PC-9 (cell line): ENCODE measurements at regions of chr4 and their contacts with region 1.

Region 1: DNA sequence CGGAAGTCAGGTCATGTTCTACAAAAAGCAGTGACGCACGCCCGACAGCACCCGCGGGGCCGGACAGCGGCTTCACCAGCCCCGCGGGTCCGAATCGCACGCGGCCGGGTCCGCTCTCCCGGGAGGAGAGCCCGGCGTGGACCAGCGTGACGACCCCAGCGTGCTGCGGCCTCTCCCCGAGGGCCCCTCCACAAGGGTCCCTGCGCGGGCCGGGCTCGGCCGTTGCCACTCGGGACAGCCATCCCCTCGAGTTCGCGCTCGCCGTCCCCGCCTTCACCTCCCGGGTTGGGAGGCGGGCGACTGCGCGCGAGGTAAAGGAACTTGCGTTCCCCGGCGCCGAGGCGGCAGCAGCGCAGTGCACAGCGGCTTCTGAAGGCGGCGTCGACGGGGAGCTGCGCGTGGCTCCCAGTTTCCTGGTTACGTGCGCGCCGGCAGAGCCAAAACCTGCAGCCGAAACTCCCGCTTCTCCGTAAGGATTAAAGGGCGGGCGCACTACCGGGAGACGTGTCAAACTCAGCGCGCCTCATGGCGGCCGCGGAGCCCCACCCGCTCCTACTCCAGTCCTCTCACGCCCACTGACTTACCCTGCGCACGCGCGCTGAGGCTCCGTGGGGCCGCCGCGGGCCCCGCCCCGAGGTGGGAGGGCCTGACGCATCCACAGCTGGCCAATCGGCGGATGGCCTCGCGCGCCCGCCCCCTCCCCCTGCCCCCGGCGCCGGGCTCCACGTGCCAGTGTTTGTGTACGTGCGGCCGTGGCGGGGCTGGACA is 416 bp upstream of the LRP2BP start:
- DNase-seq: peak; percentile 88 to 99
- H3K4me3 ChIP-seq: peak overlapping the region; percentile 91
- H3K27ac ChIP-seq: peak overlapping the region; percentile 98
- H3K4me1 ChIP-seq: peaks cover 16% of the 10 kb centered on the region
- H3K27me3 ChIP-seq: no peaks in the 10 kb centered on the region
- CTCF ChIP-seq: no peak

Region 2: GRCh38 chr4:185209031-185209851 is 186.9 kb before region 1 on chr4 and contains the start of gene SNX25:
- CTCF ChIA-PET with region 1: interaction called, 7 read pairs
- POLR2A ChIA-PET with region 1: no interaction called
- intact Hi-C with region 1: loop called (anchors 1 kb)
- DNase-seq: peak; percentile 75 to 93
- H3K4me3 ChIP-seq: peak within 1 kb of the TSS; percentile 80
- H3K27ac ChIP-seq: peak within 1 kb of the TSS; percentile 55
- H3K4me1 ChIP-seq: peaks cover 23% of the 10 kb centered on the region
- H3K27me3 ChIP-seq: no peaks in the 10 kb centered on the region
- CTCF ChIP-seq: no peak
- total RNA-seq, gene SNX25: 18.0 and 20.1 TPM in 2 replicates

Region 3: DNA sequence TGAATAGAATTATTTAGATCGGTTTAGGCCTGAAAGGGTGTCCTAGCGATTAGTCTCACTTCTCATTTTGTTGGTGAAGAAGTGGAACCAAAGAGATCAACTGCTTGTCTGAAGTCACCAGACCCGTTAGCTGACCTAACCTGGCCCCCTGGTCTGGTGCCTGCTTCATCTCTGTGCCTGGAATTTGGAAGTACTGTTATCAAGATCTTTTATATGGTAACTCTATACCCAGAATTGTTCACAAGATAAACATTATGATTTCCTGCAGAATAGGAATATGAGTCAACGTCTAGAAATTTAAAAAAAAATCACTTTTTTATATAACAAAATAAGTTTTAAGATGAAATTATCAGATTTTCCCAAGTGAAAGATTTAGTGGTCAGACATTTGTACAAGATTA is 37.6 kb before region 1 on chr4:
- CTCF ChIA-PET with region 1: no interaction called
- POLR2A ChIA-PET with region 1: interaction called, 4 read pairs
- intact Hi-C with region 1: loop called (anchors 1 kb)
- DNase-seq: peak; percentile 53 to 73
- H3K4me3 ChIP-seq: no peak overlapping the region
- H3K27ac ChIP-seq: peak overlapping the region; percentile 53
- H3K4me1 ChIP-seq: peaks cover 18% of the 10 kb centered on the region
- H3K27me3 ChIP-seq: no peaks in the 10 kb centered on the region
- CTCF ChIP-seq: no peak

Region 4: GRCh38 chr4:185416955-185417354 is 20.8 kb after region 1 on chr4:
- CTCF ChIA-PET with region 1: no interaction called
- POLR2A ChIA-PET with region 1: no interaction called
- intact Hi-C with region 1: no loop called
- DNase-seq: no peak
- H3K4me3 ChIP-seq: no peak overlapping the region
- H3K27ac ChIP-seq: no peak overlapping the region
- H3K4me1 ChIP-seq: no peaks in the 10 kb centered on the region
- H3K27me3 ChIP-seq: no peaks in the 10 kb centered on the region
- CTCF ChIP-seq: no peak

Region 5: GRCh38 chr4:185445209-185445608 is 49.1 kb after region 1 on chr4:
- CTCF ChIA-PET with region 1: no interaction called
- POLR2A ChIA-PET with region 1: no interaction called
- intact Hi-C with region 1: no loop called
- DNase-seq: no peak
- H3K4me3 ChIP-seq: no peak overlapping the region
- H3K27ac ChIP-seq: no peak overlapping the region
- H3K4me1 ChIP-seq: no peaks in the 10 kb centered on the region
- H3K27me3 ChIP-seq: no peaks in the 10 kb centered on the region
- CTCF ChIP-seq: no peak

Region 6: DNA sequence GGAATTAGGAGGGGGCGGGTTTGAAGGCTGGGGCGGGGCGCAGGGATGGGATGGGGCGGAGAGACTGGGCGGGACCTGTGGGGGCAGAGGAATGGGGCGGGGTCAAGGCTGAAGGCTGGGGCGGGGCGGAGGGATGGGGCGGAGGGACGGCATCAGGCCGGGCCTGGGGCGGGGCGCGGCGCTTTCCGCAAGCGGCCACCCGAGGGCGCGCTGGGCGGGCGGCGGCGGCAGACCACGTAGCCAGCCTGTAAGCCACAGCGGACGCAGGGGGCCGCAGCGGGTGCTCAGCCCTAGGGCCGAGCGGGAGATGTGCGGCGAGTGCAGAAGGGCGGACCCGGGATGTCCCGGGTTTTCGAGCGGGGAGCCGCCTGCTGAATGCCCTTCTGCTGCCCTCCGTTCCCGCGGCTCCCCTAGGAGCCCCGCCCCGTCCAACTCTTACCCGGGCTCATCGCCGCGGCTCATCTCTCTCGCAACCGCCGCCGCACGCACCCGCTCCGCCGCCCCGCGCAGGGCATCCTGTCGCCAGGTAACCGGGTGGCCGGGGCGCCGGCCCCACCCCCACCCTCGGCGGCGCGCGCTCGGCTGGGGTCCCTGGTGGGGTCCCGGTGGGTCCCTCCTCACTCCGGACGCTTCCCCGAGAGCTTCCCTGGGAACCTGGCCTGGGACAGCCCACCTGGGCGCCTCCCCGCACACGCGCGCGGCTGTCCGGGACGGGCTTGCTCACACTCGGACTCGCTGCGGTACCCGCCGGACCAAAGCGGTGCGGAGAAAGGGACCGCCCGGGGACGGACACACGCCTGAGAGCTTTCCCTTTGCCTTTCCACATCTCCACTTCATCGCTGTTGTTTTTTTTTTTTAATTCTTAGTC is 75.3 kb after region 1 on chr4 and contains the start of gene CCDC110:
- CTCF ChIA-PET with region 1: no interaction called
- POLR2A ChIA-PET with region 1: no interaction called
- intact Hi-C with region 1: loop called (anchors 2 kb)
- DNase-seq: peak; percentile 46 to 91
- H3K4me3 ChIP-seq: peak within 1 kb of the TSS; percentile 73
- H3K27ac ChIP-seq: no peak within 1 kb of the TSS
- H3K4me1 ChIP-seq: 0 out of 2 replicates have a peak, but pooled peaks cover 4% of the 10 kb centered on the region
- H3K27me3 ChIP-seq: no peaks in the 10 kb centered on the region
- CTCF ChIP-seq: peak; percentile 52; the same call in 1 of the 2 replicates
- total RNA-seq, gene CCDC110: 2.1 and 4.3 TPM in 2 replicates

Region 7: GRCh38 chr4:185811509-185812364 is 415.6 kb after region 1 on chr4 and contains the start of gene SORBS2:
- CTCF ChIA-PET with region 1: interaction called, 11 read pairs
- POLR2A ChIA-PET with region 1: interaction called, 3 read pairs
- intact Hi-C with region 1: no loop called
- DNase-seq: peak; percentile 50 to 51
- H3K4me3 ChIP-seq: peak within 1 kb of the TSS; percentile 55
- H3K27ac ChIP-seq: peak within 1 kb of the TSS; percentile 57; the same call in 1 of the 2 replicates
- H3K4me1 ChIP-seq: peaks cover 5% of the 10 kb centered on the region; the same call in 1 of the 2 replicates
- H3K27me3 ChIP-seq: no peaks in the 10 kb centered on the region
- CTCF ChIP-seq: no peak
- total RNA-seq, gene SORBS2: 15.7 and 16.4 TPM in 2 replicates